GM23248 (cell line): ENCODE measurements at regions of chr5 and their contacts with region 1.

Region 1: DNA sequence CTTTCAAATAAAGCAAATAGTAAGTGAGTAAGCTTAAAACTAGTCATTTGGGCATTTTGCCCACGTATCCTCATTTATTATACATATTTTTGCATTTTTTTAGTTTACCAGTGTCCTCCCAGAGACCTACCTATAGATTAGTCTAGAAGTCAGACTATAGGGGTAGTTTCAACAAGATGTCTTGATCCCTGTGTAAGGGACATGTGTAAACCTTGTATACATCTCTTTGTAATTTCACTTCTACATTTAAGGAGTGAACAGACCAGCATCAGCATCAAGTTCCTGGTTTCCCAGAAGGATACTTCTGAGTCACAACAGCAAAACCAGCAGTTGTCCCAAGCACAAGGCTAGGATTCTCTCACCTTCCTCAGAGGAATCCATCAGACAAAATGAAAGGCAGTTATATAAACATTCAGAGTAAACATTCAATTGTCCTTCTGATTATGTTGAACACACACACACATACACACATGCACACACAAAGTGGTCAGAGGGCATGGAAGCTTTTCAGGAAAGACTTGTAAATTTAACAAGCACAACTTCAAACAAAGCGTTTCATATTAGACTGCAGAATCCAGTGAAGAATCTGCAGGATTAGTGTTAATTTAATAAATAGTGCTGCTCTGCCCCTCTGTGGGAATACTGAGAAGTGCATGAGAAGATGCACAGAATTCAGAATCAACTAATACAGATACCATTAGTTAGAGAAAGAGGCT is 55.4 kb downstream of the HINT1 start:
- DNase-seq: peak; percentile 62
- H3K4me3 ChIP-seq: no peak overlapping the region
- H3K27ac ChIP-seq: no peak overlapping the region
- H3K4me1 ChIP-seq: no peaks in the 10 kb centered on the region
- H3K27me3 ChIP-seq: no peaks in the 10 kb centered on the region; the same call in 1 of the 2 replicates

Region 2: DNA sequence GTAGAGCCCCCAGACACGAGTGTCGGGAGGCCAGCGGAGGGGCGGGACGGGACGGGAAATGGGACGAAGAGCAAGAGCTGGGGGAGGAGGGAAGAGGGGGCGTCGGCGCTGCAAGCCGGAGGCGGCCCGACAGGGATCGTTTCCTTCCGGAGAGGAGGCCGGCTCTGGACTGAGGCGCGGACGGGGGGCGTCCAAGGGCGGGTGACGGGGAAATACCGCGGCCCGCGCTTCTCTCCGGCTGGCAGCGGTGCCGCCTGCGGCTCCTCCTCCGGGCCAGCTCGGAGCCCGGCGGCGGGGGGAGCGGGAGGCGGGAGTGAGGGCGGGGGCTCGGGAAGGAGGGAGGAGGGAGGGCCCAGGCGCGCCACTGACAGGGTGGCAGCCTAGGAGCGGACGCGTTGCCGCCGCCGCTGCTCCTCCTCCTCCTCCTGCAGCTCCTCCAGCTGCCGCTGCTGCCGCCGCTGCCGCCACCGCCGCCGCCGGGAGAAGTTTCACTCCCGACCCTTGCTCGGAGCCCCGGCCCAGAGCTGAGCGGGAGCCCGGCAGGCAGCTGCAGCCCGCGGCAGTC is 1205.5 kb before region 1 on chr5 and contains the start of gene CHSY3:
- in situ Hi-C with region 1: loop called (anchors 25 kb)
- DNase-seq: peak; percentile 88
- H3K4me3 ChIP-seq: peak within 1 kb of the TSS; percentile 81
- H3K27ac ChIP-seq: no peak within 1 kb of the TSS
- H3K4me1 ChIP-seq: no peaks in the 10 kb centered on the region
- H3K27me3 ChIP-seq: 0 out of 2 replicates have a peak, but pooled peaks cover 3% of the 10 kb centered on the region
- total RNA-seq, gene CHSY3: 2.4 and 4.2 TPM in 2 replicates